Ovary (tissue), 10 donors: ENCODE measurements at regions of chr5 and their contacts with region 1.

Region 1: DNA sequence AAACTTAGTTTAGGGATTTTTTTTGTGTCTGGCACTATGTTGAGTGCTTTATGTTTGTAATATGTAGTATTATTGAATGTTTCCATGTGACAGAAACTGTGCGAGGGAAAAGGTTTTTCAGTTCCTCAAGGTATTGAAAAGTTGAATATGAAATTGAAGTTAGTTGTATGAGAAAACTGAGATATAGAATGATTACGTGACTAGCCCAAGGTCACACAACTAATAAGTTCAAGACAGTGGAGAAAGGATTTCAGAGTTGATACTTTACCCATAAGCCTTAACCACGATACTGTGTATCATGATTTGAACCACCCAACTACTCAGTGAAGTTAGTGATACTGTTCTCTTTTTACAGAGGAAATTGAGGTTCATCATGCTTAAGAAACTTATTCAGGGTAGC is 5.7 kb downstream of the NIPBL start:
- DNase-seq: no peak
- H3K4me3 ChIP-seq: no peak overlapping the region
- H3K27ac ChIP-seq: no peak overlapping the region
- H3K4me1 ChIP-seq: peaks cover 12% of the 10 kb centered on the region
- H3K27me3 ChIP-seq: no peaks in the 10 kb centered on the region
- CTCF ChIP-seq: no peak
- EP300 ChIP-seq: no peak
- POLR2A ChIP-seq: no peak

Region 2: DNA sequence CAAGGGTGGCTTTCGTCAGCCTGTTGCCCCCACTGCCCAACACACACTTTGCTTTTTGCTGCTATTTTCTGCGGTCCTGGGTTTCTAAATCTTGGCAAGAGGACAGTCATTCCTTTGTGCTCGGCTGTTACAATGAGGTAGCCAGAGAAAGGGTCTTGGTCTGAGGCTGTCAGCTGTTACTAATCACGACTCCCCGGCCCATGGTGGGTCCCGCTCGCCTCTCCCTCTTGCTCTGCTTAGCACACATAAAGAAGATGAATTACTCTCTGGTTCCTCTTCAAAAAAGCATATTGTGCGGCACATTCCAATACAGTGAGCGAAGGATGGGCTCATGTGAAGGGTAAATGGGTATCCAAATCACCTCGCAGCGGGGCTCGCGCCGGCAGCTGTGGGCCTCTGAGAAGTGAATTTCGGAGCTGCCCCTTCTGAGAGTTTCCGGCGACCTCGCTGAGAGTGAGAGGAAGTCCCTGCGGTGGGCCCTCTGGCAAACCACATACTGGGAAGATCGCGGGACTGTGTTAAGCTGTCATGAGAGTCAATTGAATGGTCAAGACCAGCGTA is 219.9 kb before region 1 on chr5:
- intact Hi-C with region 1: no loop called
- DNase-seq: no peak
- H3K4me3 ChIP-seq: no peak overlapping the region
- H3K27ac ChIP-seq: no peak overlapping the region
- H3K4me1 ChIP-seq: no peaks in the 10 kb centered on the region
- H3K27me3 ChIP-seq: no peaks in the 10 kb centered on the region
- CTCF ChIP-seq: no peak
- EP300 ChIP-seq: no peak
- POLR2A ChIP-seq: no peak

Region 3: GRCh38 chr5:36934740-36935356 is 52.6 kb after region 1 on chr5:
- intact Hi-C with region 1: loop called in 2 of 4 experiments (anchors 10 kb)
- DNase-seq: no peak
- H3K4me3 ChIP-seq: no peak overlapping the region
- H3K27ac ChIP-seq: no peak overlapping the region
- H3K4me1 ChIP-seq: peaks cover 6% of the 10 kb centered on the region
- H3K27me3 ChIP-seq: no peaks in the 10 kb centered on the region
- CTCF ChIP-seq: no peak
- EP300 ChIP-seq: no peak
- POLR2A ChIP-seq: no peak